CD14-positive monocyte (primary cell): ENCODE measurements at regions of chr9 and their contacts with region 1.

Region 1: GRCh38 chr9:74773886-74774479 is 113.7 kb downstream of the TRPM6 start:
- DNase-seq: peak; percentile 46 to 72 (median 61)
- H3K4me3 ChIP-seq: no peak overlapping the region
- H3K4me3 Mint-ChIP-seq: no peak overlapping the region
- H3K27ac ChIP-seq: no peak overlapping the region
- H3K27ac Mint-ChIP-seq: peak overlapping the region in 1 of 7 donors; percentile 6
- H3K4me1 ChIP-seq: no peaks in the 10 kb centered on the region
- H3K4me1 Mint-ChIP-seq: peaks cover 4% of the 10 kb centered on the region
- H3K27me3 ChIP-seq: no peaks in the 10 kb centered on the region
- H3K27me3 Mint-ChIP-seq: peaks cover 1 to 3% (median 3%) of the 10 kb centered on the region in 3 donors
- CTCF ChIP-seq: peak; percentile 88

Region 2: GRCh38 chr9:75001719-75002422 is 227.9 kb after region 1 on chr9:
- intact Hi-C with region 1: loop called (anchors 2 kb)
- DNase-seq: peak; percentile 66 to 74 (median 72)
- H3K4me3 ChIP-seq: no peak overlapping the region
- H3K4me3 Mint-ChIP-seq: no peak overlapping the region
- H3K27ac ChIP-seq: no peak overlapping the region
- H3K27ac Mint-ChIP-seq: no peak overlapping the region
- H3K4me1 ChIP-seq: no peaks in the 10 kb centered on the region
- H3K4me1 Mint-ChIP-seq: no peaks in the 10 kb centered on the region
- H3K27me3 ChIP-seq: no peaks in the 10 kb centered on the region
- H3K27me3 Mint-ChIP-seq: peaks cover 0 to 1% (median 0%) of the 10 kb centered on the region in 3 donors
- CTCF ChIP-seq: peak; percentile 92

Region 3: GRCh38 chr9:75071530-75072124 is 297.6 kb after region 1 on chr9:
- intact Hi-C with region 1: loop called (anchors 5 kb)
- DNase-seq: no peak
- H3K4me3 ChIP-seq: no peak overlapping the region
- H3K4me3 Mint-ChIP-seq: no peak overlapping the region
- H3K27ac ChIP-seq: no peak overlapping the region
- H3K27ac Mint-ChIP-seq: peak overlapping the region in 1 of 7 donors; percentile 43
- H3K4me1 ChIP-seq: no peaks in the 10 kb centered on the region
- H3K4me1 Mint-ChIP-seq: no peaks in the 10 kb centered on the region
- H3K27me3 ChIP-seq: no peaks in the 10 kb centered on the region
- H3K27me3 Mint-ChIP-seq: peaks cover 0 to 6% (median 3%) of the 10 kb centered on the region in 3 donors
- CTCF ChIP-seq: no peak